Activated CD4-positive, alpha-beta memory T cell treated with anti-CD3 and anti-CD28 coated beads for 36 hours (primary cell): ENCODE measurements at regions of chr1 and their contacts with region 1.

Region 1: GRCh38 chr1:61049850-61050540 is 32.4 kb upstream of the NFIA start:
- DNase-seq: peak; percentile 94
- H3K4me3 Mint-ChIP-seq: peak overlapping the region; percentile 71
- H3K27ac Mint-ChIP-seq: no peak overlapping the region
- H3K4me1 Mint-ChIP-seq: peaks cover 24% of the 10 kb centered on the region
- H3K27me3 Mint-ChIP-seq: peaks cover 37% of the 10 kb centered on the region

Region 2: DNA sequence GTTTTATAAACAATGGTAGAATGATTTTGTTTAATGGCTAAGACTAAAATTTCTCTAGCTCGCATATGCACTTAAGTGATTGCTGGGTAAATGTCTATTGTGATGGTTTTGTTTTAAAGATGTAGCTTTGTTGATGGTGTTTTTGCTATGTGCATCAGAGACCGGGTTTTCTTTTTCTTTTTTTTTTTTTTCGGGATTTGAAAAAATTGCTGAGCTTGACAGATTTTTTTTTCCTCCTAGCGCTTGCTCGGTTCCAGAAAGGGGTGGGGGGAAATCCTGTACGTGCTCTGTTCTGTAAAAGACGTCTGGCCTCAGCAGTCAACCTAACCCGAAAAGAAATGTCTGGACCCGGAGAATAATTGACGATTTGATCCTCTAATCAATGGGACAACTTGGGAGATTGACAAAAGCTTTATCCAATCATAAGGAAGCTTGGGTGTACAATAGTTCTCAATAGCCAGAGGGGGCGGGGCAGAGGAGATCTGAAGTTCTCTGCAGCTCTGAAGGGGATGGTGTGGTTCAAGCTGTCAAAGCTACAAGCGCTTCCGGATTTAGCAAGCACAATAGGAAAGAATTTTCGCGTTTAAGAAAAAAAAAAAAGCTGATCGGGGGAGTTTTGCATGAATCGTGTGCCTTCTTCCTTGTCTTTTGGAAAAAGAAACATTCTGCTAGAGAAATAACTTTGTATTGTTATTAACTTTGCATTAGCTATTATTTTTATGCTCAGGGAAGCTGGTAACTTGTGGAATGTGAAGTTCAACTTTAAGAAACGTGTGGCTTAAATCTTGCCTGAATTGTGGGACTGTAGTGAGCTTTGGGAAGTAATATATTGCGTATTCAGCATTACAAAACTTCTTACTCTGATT is 27.9 kb after region 1 on chr1:
- CTCF ChIA-PET with region 1: interaction called, 64 read pairs
- POLR2A ChIA-PET with region 1: interaction called, 31 read pairs
- intact Hi-C with region 1: loop called (anchors 1 kb)
- DNase-seq: peak; percentile 93
- H3K4me3 Mint-ChIP-seq: peak overlapping the region; percentile 89
- H3K27ac Mint-ChIP-seq: peak overlapping the region; percentile 86
- H3K4me1 Mint-ChIP-seq: peaks cover 44% of the 10 kb centered on the region
- H3K27me3 Mint-ChIP-seq: peaks cover 5% of the 10 kb centered on the region

Region 3: DNA sequence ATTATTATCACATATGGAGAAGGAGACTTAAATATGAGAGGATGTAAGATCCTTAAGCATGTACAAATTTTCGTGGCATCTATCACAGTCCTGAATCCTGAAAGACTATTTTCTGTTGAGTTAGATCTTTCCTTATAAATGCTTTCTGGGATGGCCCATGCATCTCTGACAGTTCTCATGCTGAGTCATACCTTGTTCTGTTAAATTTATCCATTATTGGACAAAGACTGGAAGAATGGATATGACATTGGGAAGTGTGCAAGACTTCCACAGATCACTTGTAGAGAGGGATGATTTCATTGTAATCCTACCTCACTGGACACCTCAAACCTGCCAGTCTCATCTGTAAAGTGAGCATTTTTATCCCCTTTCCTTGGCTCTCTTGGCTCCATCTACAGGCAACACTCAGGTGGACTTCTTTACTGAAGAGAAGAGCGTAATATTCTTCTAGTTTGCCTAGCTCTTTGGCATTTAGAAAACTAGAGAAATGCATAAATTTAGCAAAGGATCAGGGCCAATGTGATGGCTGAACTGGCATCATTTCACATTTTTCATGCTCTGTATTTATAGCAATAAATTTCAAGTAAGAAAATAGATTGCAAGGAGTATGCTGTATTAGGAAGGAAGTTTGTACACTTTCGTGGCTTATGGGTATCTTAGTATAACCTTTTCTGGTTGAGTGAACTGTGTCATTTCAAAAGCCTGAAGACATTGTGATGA is 160.6 kb after region 1 on chr1:
- CTCF ChIA-PET with region 1: interaction called, 3 read pairs
- POLR2A ChIA-PET with region 1: no interaction called
- intact Hi-C with region 1: loop called (anchors 5 kb)
- DNase-seq: no peak
- H3K4me3 Mint-ChIP-seq: no peak overlapping the region
- H3K27ac Mint-ChIP-seq: no peak overlapping the region
- H3K4me1 Mint-ChIP-seq: peaks cover 4% of the 10 kb centered on the region
- H3K27me3 Mint-ChIP-seq: peaks cover 2% of the 10 kb centered on the region

Region 4: DNA sequence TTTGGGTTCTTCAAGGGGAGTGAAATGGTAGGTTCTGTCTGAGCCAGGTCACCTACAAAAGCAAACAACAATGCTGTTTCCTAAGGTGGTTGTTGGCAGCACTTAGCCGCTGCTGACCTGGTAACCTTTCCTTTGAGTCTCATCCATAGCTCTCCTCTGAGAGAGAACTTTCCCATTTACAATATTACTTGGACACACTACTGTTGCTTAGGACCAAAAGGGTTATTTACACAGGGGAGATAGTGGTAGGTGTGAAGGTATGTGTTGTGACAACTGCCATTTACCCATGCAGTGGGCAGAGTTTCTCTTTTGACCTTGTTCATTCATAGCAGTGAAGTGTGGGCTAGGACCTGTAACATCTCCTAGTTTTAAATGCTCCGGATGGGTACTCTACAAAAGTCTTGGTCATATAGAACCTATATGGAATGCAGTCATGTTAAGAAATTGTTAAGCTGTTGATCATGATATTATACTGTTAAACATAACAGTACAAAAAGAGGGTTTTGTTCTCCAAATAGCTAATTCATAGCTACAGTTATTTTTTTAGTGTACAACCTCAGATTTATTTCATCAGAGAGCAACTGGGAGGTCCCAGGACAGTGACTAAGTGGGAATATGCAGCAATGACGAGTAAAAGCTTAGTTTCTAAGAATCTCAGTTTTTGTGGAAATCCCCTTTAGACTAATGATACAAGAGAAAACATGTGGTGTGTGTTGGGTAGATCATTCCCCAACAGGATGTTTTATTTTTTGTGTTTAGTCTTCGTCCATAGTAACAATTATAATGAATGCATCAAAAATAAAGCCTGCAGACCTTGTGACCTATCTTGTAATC is 252.0 kb after region 1 on chr1:
- CTCF ChIA-PET with region 1: interaction called, 14 read pairs
- POLR2A ChIA-PET with region 1: interaction called, 6 read pairs
- intact Hi-C with region 1: no loop called
- DNase-seq: peak; percentile 51
- H3K4me3 Mint-ChIP-seq: peak overlapping the region; percentile 1
- H3K27ac Mint-ChIP-seq: peak overlapping the region; percentile 89
- H3K4me1 Mint-ChIP-seq: peaks cover 35% of the 10 kb centered on the region
- H3K27me3 Mint-ChIP-seq: peaks cover 5% of the 10 kb centered on the region

Region 5: DNA sequence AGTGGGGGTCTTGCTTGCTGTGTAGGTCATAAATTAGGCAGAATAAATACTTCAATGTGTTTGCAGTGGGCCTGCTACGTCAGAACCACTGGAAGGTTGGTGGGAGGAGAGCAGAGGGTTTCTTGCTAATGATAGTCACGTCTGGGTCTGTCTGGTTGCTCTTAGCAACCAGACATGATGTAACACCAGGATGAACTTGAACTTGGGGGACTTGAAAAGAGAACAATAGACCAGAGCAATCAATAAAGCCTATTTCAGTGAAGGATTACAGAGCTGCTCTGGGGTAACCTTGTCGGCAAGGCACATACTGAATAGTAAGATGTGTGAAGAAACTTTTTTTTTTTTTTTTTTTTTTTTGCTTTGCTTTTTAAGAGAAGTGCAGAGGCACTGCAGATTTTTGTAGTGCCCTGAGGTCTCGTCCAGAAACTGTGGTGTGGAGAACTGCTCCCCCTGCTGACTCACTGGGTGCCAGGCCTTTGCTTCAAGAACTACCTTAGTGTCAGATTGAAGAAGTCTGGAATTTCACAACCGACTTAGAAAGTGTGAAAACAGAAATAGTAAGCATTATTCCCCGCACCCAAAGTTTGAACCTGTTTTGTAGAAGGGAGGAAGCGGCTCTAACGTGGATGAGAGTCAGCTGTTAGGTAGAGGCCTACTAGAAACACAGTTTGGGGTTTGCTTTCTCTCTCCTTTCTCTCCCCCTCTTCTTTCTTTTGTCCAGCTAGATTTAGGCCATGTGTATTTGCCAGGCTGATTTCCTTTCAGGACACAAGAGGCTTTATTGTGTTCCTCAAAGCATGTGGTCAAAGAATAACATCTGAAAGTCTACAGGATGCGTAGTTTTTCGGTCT is 403.3 kb after region 1 on chr1:
- CTCF ChIA-PET with region 1: interaction called, 34 read pairs
- POLR2A ChIA-PET with region 1: no interaction called
- intact Hi-C with region 1: loop called (anchors 1 kb)
- DNase-seq: peak; percentile 84
- H3K4me3 Mint-ChIP-seq: peak overlapping the region; percentile 16
- H3K27ac Mint-ChIP-seq: peak overlapping the region; percentile 57
- H3K4me1 Mint-ChIP-seq: peaks cover 13% of the 10 kb centered on the region
- H3K27me3 Mint-ChIP-seq: no peaks in the 10 kb centered on the region